B cell (primary cell): ENCODE measurements at regions of chr19 and their contacts with region 1.

Region 1: DNA sequence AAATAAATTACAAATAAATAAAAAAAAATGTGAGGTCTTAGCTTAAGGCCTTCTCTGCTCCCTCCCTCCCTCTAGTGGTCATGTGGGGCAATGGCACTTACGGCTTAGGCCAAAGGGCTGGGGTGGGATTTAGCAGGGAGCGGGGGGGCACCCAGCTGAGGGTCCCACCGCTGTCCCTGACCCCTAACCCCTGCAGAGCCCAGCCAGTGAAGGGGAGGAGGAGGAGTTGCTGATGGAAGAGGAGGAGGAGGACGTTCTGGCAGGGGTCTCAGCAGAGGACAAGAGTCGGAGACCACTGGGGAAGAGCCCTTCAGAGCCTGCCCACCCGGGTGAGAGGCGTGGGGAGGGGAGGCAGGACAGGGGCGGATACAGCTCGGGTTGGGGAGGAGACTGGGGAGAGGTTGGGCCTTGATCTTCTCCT is 9.3 kb downstream of the MPND start:
- DNase-seq: peak; percentile 78
- ATAC-seq: peak; percentile 86
- H3K4me3 ChIP-seq: no peak overlapping the region
- H3K4me3 Mint-ChIP-seq: no peak overlapping the region
- H3K27ac ChIP-seq: no peak overlapping the region
- H3K27ac Mint-ChIP-seq: peak overlapping the region; percentile 61
- H3K4me1 ChIP-seq: peaks cover 0 to 5% of the 10 kb centered on the region in 2 donors
- H3K4me1 Mint-ChIP-seq: peaks cover 2% of the 10 kb centered on the region
- H3K27me3 ChIP-seq: no peaks in the 10 kb centered on the region
- H3K27me3 Mint-ChIP-seq: no peaks in the 10 kb centered on the region
- CTCF ChIP-seq: peak; percentile 89

Region 2: GRCh38 chr19:4164262-4164661 is 188.4 kb before region 1 on chr19:
- CTCF ChIA-PET with region 1: no interaction called
- POLR2A ChIA-PET with region 1: no interaction called
- intact Hi-C with region 1: no loop called
- DNase-seq: no peak
- ATAC-seq: no peak
- H3K4me3 ChIP-seq: no peak overlapping the region
- H3K4me3 Mint-ChIP-seq: no peak overlapping the region
- H3K27ac ChIP-seq: no peak overlapping the region
- H3K27ac Mint-ChIP-seq: no peak overlapping the region
- H3K4me1 ChIP-seq: no peaks in the 10 kb centered on the region
- H3K4me1 Mint-ChIP-seq: no peaks in the 10 kb centered on the region
- H3K27me3 ChIP-seq: peaks cover 0 to 11% (median 2%) of the 10 kb centered on the region in 4 experiments
- H3K27me3 Mint-ChIP-seq: peaks cover 15% of the 10 kb centered on the region
- CTCF ChIP-seq: no peak

Region 3: GRCh38 chr19:4267101-4267900 is 85.4 kb before region 1 on chr19:
- CTCF ChIA-PET with region 1: interaction called, 37 read pairs
- POLR2A ChIA-PET with region 1: no interaction called
- intact Hi-C with region 1: loop called (anchors 1 kb)
- DNase-seq: peak; percentile 70
- ATAC-seq: peak; percentile 79
- H3K4me3 ChIP-seq: no peak overlapping the region
- H3K4me3 Mint-ChIP-seq: no peak overlapping the region
- H3K27ac ChIP-seq: no peak overlapping the region
- H3K27ac Mint-ChIP-seq: peak overlapping the region; percentile 37
- H3K4me1 ChIP-seq: peaks cover 0 to 11% of the 10 kb centered on the region in 2 donors
- H3K4me1 Mint-ChIP-seq: peaks cover 12% of the 10 kb centered on the region
- H3K27me3 ChIP-seq: no peaks in the 10 kb centered on the region
- H3K27me3 Mint-ChIP-seq: no peaks in the 10 kb centered on the region
- CTCF ChIP-seq: peak; percentile 84

Region 4: GRCh38 chr19:4320419-4320818 is 32.3 kb before region 1 on chr19:
- CTCF ChIA-PET with region 1: interaction called, 12 read pairs
- POLR2A ChIA-PET with region 1: interaction called, 3 read pairs
- intact Hi-C with region 1: no loop called
- DNase-seq: no peak
- ATAC-seq: no peak
- H3K4me3 ChIP-seq: no peak overlapping the region
- H3K4me3 Mint-ChIP-seq: no peak overlapping the region
- H3K27ac ChIP-seq: no peak overlapping the region
- H3K27ac Mint-ChIP-seq: no peak overlapping the region
- H3K4me1 ChIP-seq: no peaks in the 10 kb centered on the region
- H3K4me1 Mint-ChIP-seq: no peaks in the 10 kb centered on the region
- H3K27me3 ChIP-seq: no peaks in the 10 kb centered on the region
- H3K27me3 Mint-ChIP-seq: no peaks in the 10 kb centered on the region
- CTCF ChIP-seq: no peak

Region 5: DNA sequence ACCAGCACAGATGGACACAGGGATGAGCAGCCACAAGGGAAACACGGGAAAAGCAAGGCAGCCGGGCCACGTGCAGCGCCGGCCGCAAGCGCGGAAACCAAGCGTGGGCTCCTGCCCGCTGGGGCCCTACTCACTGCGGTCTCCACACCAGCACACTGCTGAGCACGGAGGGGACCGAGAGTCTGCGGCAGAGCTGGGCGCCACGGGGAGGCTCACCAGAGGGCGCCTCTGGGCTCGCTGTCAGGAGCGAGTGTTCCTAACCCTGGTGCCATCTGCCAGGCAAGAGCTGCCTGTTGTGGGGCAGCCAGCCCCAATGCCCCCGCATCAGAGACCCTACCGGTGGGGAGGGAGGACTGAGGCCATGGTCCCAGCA is 17.2 kb after region 1 on chr19:
- CTCF ChIA-PET with region 1: interaction called, 14 read pairs
- POLR2A ChIA-PET with region 1: no interaction called
- intact Hi-C with region 1: loop called (anchors 1 kb)
- DNase-seq: peak; percentile 70
- ATAC-seq: peak; percentile 48
- H3K4me3 ChIP-seq: peak overlapping the region in 4 of 5 experiments; percentile 40 to 68 (median 50)
- H3K4me3 Mint-ChIP-seq: peak overlapping the region; percentile 83
- H3K27ac ChIP-seq: peak overlapping the region; percentile 84 to 95
- H3K27ac Mint-ChIP-seq: peak overlapping the region; percentile 96
- H3K4me1 ChIP-seq: peaks cover 69 to 76% of the 10 kb centered on the region in 2 donors
- H3K4me1 Mint-ChIP-seq: peaks cover 62% of the 10 kb centered on the region
- H3K27me3 ChIP-seq: no peaks in the 10 kb centered on the region
- H3K27me3 Mint-ChIP-seq: no peaks in the 10 kb centered on the region
- CTCF ChIP-seq: peak; percentile 61

Region 6: DNA sequence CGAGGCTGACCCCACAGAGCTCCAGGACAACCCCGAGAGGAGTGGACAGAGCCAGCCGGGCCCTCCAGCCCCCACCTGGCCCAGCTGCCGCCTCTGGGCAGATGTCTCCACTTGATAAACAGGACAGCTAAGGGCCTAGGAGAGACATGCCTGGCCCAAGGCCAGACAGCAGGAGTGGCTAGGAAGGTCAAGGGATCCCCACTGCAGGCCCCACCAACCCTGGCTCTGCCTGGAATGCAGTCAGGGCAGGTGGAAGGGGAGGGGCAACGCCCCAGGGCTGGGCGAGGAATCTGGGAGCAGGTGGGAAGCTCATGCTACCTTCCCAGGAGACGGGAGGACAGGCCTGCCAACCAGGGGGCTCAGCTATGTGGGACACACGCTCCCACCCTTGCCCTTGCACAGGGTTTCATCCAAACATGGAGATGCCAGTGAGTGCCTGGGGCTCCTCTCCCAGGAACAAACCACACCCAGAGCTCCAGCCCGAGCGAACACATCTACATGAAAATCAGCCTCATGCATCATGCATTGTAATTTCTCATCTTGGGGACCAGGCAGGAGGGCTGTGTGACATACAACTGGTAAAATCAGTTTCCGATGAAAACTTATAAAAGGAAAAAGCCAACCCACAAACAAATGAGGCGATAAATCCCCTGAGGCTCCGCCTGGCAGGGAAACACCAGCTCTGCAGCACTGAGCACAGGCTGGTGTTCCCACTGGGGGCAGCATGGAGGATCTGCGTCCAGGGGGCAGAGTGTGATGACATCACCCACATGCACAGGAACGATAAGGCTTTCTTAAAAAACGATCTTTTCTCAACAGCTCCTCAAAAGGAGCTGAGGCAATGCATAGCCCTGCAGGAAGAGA is 22.7 kb after region 1 on chr19:
- CTCF ChIA-PET with region 1: interaction called, 10 read pairs
- POLR2A ChIA-PET with region 1: no interaction called
- intact Hi-C with region 1: no loop called
- DNase-seq: peak; percentile 85
- ATAC-seq: peak; percentile 70
- H3K4me3 ChIP-seq: peak overlapping the region in 3 of 5 experiments; percentile 38 to 56 (median 39)
- H3K4me3 Mint-ChIP-seq: peak overlapping the region; percentile 84
- H3K27ac ChIP-seq: peak overlapping the region; percentile 58 to 63
- H3K27ac Mint-ChIP-seq: peak overlapping the region; percentile 87
- H3K4me1 ChIP-seq: peaks cover 100% of the 10 kb centered on the region in 2 donors
- H3K4me1 Mint-ChIP-seq: peaks cover 88% of the 10 kb centered on the region
- H3K27me3 ChIP-seq: no peaks in the 10 kb centered on the region
- H3K27me3 Mint-ChIP-seq: no peaks in the 10 kb centered on the region
- CTCF ChIP-seq: peak; percentile 63